Activated CD4-positive, alpha-beta T cell treated with anti-CD3 and anti-CD28 coated beads for 36 hours (primary cell): ENCODE measurements at regions of chr11 and their contacts with region 1.

Region 1: GRCh38 chr11:108008656-108009496 is at the start of gene CUL5:
- DNase-seq: peak; percentile 95
- ATAC-seq: peak; percentile 89
- H3K4me3 Mint-ChIP-seq: peak within 1 kb of the TSS; percentile 99
- H3K27ac Mint-ChIP-seq: peak within 1 kb of the TSS; percentile 95
- H3K4me1 Mint-ChIP-seq: peaks cover 16% of the 10 kb centered on the region
- H3K27me3 Mint-ChIP-seq: no peaks in the 10 kb centered on the region
- total RNA-seq, gene CUL5: 19.7 to 34.4 TPM

Region 2: DNA sequence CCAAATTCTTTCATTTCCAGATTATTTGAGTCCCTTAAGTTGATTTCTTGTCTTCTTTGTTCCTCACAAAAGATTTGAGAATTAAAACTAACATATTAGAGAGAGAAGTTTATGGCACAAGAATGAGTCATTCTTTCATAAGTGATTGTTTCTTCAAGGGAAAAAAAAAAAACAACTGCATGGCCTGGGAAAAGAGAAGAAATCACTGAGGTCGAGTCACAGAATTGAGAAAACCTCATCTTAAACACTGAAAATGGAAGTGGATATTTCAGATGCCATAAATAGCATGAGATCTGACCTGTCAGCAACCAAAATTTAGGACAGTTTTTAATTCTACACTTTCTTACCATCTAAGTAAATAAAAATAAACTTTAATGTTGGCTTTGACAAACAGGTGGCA is 638.5 kb before region 1 on chr11:
- CTCF ChIA-PET with region 1: no interaction called
- POLR2A ChIA-PET with region 1: no interaction called
- intact Hi-C with region 1: no loop called
- DNase-seq: no peak
- ATAC-seq: no peak
- H3K4me3 Mint-ChIP-seq: no peak overlapping the region
- H3K27ac Mint-ChIP-seq: no peak overlapping the region
- H3K4me1 Mint-ChIP-seq: no peaks in the 10 kb centered on the region
- H3K27me3 Mint-ChIP-seq: no peaks in the 10 kb centered on the region

Region 3: DNA sequence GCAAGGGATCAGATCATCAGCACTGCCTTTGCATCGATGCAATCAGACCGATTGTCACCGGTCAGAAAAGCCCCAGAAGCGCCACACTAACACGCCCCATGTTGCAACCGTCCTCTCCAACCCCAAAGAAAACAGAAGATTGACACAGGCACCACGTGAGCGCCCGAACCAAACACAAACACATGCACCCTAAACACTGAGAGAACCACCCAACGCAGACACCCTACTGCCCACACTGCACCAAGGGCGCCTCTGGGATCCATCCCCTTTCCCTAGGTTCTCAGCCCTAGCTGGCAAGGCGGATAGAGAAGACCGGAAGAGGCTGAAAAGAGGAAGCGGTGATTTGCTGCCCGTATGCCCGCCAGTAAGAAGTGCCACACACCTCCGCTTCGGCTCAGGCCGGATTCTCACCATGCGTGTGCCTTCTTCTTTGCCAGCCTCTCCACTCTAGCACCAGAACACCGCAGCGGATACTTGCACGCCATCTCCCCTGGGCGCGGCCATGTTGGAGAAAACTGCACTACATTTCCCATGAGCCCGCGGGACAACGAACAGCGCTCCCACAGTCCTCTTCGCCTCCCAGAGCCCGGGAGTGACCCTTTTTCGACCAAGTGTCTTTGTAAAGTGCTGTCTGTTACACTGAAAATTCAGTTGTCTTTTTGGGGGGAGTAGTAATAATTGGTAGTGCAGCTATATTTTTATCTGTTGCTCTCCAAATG is 443.5 kb before region 1 on chr11 and contains the start of gene ALKBH8:
- CTCF ChIA-PET with region 1: interaction called, 3 read pairs
- POLR2A ChIA-PET with region 1: no interaction called
- intact Hi-C with region 1: loop called in 1 of 2 experiments (anchors 2 kb)
- DNase-seq: peak; percentile 90
- ATAC-seq: peak; percentile 92
- H3K4me3 Mint-ChIP-seq: peak within 1 kb of the TSS; percentile 93
- H3K27ac Mint-ChIP-seq: peak within 1 kb of the TSS; percentile 98
- H3K4me1 Mint-ChIP-seq: peaks cover 54% of the 10 kb centered on the region
- H3K27me3 Mint-ChIP-seq: no peaks in the 10 kb centered on the region
- total RNA-seq, gene ALKBH8: 11.4 to 12.6 TPM

Region 4: DNA sequence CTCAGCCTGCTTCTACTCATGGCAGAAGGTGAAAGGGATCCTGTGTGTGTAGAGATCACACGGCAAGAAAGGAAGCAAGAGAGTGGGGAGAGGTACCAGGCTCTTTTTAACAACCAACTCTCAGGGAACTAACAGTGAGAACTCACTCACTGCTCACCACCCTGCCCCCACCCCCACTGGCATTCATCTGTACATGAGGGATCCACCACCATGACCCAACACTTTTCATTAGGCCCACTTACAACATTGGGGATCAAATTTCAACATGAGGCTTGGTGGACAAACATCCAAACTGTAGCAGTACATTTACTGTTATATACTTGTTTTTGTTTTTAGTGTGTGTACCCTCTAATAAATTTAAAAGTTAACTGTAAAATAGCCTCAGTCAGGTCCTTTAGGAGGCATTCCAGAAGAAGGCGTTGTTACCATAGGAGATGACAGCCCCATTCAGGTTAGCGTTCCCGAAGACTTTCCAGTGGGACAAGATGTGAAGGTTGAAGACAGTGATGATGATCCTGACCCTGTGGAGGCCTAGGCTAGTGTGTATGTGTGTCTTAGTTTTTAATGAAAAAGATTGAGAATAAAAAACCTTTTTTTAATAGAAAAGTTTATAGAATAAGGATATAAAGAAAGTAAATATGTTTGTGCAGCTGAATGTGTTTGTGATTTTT is 11.1 kb after region 1 on chr11:
- CTCF ChIA-PET with region 1: interaction called, 32 read pairs
- POLR2A ChIA-PET with region 1: interaction called, 3 read pairs
- intact Hi-C with region 1: loop called in 1 of 2 experiments (anchors 1 kb)
- DNase-seq: no peak
- ATAC-seq: no peak
- H3K4me3 Mint-ChIP-seq: no peak overlapping the region
- H3K27ac Mint-ChIP-seq: no peak overlapping the region
- H3K4me1 Mint-ChIP-seq: peaks cover 56% of the 10 kb centered on the region
- H3K27me3 Mint-ChIP-seq: no peaks in the 10 kb centered on the region

Region 5: DNA sequence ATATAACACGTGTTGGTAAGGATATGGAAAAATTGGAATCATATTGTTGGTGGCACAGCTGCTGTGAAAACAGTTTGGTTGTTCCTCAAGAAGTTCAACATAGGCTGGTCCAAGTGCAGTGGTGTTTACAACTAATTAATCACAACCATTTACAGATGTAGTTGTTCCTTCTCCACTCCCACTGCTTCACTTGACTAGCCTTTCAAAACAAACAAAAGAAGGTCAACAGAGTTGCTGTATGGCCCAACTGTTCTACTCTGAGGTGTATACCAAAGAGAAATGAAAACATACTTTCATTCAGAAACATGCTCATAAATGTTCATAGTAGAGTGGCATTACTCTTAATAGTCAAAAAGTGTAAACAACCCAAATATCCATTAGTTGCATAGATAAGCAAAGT is 75.9 kb after region 1 on chr11:
- CTCF ChIA-PET with region 1: no interaction called
- POLR2A ChIA-PET with region 1: no interaction called
- intact Hi-C with region 1: no loop called
- DNase-seq: no peak
- ATAC-seq: no peak
- H3K4me3 Mint-ChIP-seq: no peak overlapping the region
- H3K27ac Mint-ChIP-seq: no peak overlapping the region
- H3K4me1 Mint-ChIP-seq: no peaks in the 10 kb centered on the region
- H3K27me3 Mint-ChIP-seq: no peaks in the 10 kb centered on the region

Region 6: GRCh38 chr11:108121274-108122155 is 112.6 kb after region 1 on chr11 and contains the start of gene ACAT1:
- CTCF ChIA-PET with region 1: interaction called, 6 read pairs
- POLR2A ChIA-PET with region 1: no interaction called
- intact Hi-C with region 1: loop called (anchors 1 to 2 kb)
- DNase-seq: peak; percentile 98
- ATAC-seq: peak; percentile 96
- H3K4me3 Mint-ChIP-seq: peak within 1 kb of the TSS; percentile 87
- H3K27ac Mint-ChIP-seq: peak within 1 kb of the TSS; percentile 85
- H3K4me1 Mint-ChIP-seq: peaks cover 40% of the 10 kb centered on the region
- H3K27me3 Mint-ChIP-seq: no peaks in the 10 kb centered on the region
- total RNA-seq, gene ACAT1: 59.0 to 67.0 TPM

Region 7: DNA sequence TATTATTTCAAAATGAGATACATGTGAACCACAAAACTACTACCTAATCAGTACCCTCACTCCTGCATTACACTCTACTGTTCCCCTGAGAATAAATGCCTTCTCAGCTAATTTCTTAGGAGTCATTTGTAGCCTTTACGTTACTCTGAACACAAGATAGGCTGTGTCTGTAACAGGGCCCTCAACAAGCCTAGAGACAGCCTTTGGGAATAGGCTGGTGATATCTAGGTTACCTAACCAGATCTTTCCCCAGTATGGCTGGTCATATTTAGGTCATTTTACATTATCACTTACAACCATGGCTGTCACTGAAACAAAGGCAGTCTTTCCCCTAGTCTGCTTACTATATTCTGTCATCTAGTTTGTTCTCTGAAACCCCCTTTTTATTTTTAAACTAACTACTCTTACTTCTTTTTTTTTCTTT is 228.2 kb after region 1 on chr11:
- CTCF ChIA-PET with region 1: no interaction called
- POLR2A ChIA-PET with region 1: no interaction called
- intact Hi-C with region 1: no loop called
- DNase-seq: no peak
- ATAC-seq: peak; percentile 47
- H3K4me3 Mint-ChIP-seq: peak overlapping the region; percentile 57
- H3K27ac Mint-ChIP-seq: peak overlapping the region; percentile 83
- H3K4me1 Mint-ChIP-seq: peaks cover 77% of the 10 kb centered on the region
- H3K27me3 Mint-ChIP-seq: no peaks in the 10 kb centered on the region

Region 8: DNA sequence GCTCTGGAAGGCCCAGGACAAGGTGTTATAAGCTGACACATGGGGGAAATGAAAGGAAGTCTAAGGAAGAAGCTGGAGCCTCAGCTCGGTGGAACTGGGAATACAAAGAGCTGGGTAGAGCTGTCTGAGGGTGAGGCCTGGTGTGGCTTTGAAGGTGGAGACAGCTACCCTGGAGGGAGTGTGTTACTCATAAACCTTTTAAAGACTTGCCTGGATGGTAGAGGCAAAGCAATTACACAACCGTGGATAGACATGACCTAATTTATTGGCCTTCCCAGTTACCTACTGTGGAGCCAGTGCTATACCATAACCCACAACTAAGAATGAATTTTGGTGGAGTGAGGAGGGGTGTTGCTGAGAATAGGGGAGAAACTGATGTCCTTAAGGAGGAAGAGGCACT is 562.1 kb after region 1 on chr11:
- CTCF ChIA-PET with region 1: no interaction called
- POLR2A ChIA-PET with region 1: no interaction called
- intact Hi-C with region 1: no loop called
- DNase-seq: no peak
- ATAC-seq: no peak
- H3K4me3 Mint-ChIP-seq: no peak overlapping the region
- H3K27ac Mint-ChIP-seq: no peak overlapping the region
- H3K4me1 Mint-ChIP-seq: no peaks in the 10 kb centered on the region
- H3K27me3 Mint-ChIP-seq: no peaks in the 10 kb centered on the region

Region 9: DNA sequence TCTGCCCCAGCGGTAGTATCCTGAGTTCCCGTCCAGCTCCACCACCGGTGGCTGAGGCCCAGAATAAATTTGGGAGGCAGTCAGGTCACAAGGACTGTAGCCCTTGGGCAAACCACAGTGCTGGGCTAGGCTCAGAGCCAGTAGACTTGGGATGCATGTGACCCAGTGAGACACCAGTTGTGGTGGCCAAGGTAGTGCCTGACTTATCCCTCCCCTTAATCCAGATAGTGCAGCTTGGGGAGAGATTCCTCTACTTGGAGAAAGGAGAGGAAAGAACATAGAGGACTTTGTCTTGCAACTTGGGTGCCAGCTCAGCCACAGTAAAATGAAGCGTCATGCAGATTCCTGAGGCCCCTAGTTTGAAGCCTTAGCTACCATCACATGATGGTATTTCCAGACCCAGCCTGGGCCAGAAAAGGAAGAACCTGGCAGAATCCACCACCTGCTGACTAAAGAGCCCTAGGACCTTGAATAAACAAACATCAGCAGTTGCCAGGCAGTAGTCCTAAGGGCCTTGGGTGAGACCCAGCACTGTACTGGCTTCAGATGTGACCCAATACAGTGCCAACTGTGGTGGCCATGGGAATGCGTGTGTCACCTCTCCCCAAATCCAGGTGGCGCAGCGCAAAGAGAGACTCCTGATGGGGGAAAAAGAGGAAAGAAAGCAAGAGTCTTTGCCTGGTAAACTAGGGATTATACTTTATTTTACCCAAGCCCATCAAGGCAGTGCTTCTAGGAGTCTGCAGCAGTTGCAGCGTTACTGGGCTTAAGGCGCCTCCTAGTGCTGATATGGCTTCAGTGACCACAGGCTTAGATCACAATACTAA is 639.0 kb after region 1 on chr11:
- CTCF ChIA-PET with region 1: no interaction called
- POLR2A ChIA-PET with region 1: no interaction called
- intact Hi-C with region 1: loop called in 1 of 2 experiments (anchors 1 kb)
- DNase-seq: peak; percentile 81
- ATAC-seq: peak; percentile 99
- H3K4me3 Mint-ChIP-seq: no peak overlapping the region
- H3K27ac Mint-ChIP-seq: no peak overlapping the region
- H3K4me1 Mint-ChIP-seq: no peaks in the 10 kb centered on the region
- H3K27me3 Mint-ChIP-seq: no peaks in the 10 kb centered on the region